ENCODE measurements at regions of chr6 and their contacts with region 1.

Region 1: DNA sequence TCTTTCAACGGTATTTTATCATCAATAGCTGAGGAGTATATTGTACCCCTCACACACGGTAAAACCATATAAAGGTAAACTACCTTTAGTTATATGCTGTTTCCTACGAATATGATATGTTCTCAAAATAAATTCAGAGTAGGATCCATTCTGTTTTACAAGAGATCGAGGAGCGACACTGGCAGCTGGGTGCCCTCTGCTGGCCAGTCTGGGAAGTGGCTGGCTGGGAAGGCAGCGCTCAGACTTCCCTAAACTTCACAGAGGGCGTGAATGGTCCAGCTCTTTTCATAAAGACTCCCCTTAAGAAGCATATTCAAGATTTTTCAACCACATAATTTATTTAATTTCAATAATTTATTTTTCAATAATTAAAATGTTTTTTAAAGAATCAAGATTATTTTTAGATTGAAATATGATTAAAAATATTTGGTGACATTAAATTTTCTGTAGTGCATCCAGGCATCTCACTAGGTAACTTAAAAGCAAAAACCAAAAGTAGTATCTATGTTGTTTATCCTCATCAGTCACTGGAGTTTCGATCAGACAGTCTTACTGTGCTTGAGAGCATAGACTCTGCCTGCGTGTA is 187.5 kb upstream of the PDE10A start:
- DNase-seq: peak; percentile 64
- H3K4me3 ChIP-seq: no peak overlapping the region
- H3K27ac ChIP-seq: no peak overlapping the region
- H3K4me1 ChIP-seq: peaks cover 10% of the 10 kb centered on the region
- H3K27me3 ChIP-seq: peaks cover 80% of the 10 kb centered on the region
- CTCF ChIP-seq: peak; percentile 97

Region 2: DNA sequence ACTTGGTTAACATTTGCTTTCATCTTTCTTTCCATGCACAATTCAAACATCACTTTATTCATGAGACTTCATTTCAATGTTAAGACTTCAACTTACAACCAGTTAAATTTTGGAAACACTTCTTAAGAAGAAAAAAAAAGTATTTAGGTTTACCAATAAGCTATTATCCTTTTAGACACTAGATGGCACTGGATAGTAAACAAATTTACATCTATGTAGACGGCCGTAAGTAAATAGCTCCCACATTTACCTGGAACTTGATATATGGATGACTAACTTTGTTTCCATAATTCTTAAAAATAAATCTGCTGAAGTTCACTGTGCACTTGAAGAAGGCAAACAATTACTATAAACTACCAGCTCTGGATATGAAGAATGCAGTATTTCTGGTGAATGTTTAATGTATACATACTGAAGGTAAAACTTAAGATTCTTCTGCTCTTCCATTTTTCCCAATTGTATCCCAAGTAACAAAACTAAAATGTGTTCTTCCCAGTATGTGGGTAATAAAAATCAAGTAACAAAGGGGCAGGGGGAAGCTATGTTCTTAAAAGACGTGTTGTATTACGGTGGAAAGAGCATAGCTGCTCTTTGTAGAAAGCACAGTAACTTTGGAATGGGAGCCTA is 410.5 kb before region 1 on chr6:
- CTCF ChIA-PET with region 1: interaction called, 10 read pairs
- POLR2A ChIA-PET with region 1: no interaction called
- intact Hi-C with region 1: loop called (anchors 2 kb)
- DNase-seq: peak; percentile 41
- H3K4me3 ChIP-seq: no peak overlapping the region
- H3K27ac ChIP-seq: no peak overlapping the region
- H3K4me1 ChIP-seq: no peaks in the 10 kb centered on the region
- H3K27me3 ChIP-seq: no peaks in the 10 kb centered on the region
- CTCF ChIP-seq: peak; percentile 65

Region 3: GRCh38 chr6:165729307-165729936 is 121.1 kb before region 1 on chr6:
- CTCF ChIA-PET with region 1: interaction called, 3 read pairs
- POLR2A ChIA-PET with region 1: no interaction called
- intact Hi-C with region 1: loop called (anchors 2 kb)
- DNase-seq: peak; percentile 41
- H3K4me3 ChIP-seq: no peak overlapping the region
- H3K27ac ChIP-seq: no peak overlapping the region
- H3K4me1 ChIP-seq: no peaks in the 10 kb centered on the region
- H3K27me3 ChIP-seq: peaks cover 37% of the 10 kb centered on the region
- CTCF ChIP-seq: peak; percentile 86

Region 4: GRCh38 chr6:165834613-165835259 is 15.8 kb before region 1 on chr6:
- CTCF ChIA-PET with region 1: interaction called, 14 read pairs
- POLR2A ChIA-PET with region 1: no interaction called
- intact Hi-C with region 1: no loop called
- DNase-seq: no peak
- H3K4me3 ChIP-seq: no peak overlapping the region
- H3K27ac ChIP-seq: no peak overlapping the region
- H3K4me1 ChIP-seq: no peaks in the 10 kb centered on the region
- H3K27me3 ChIP-seq: peaks cover 16% of the 10 kb centered on the region
- CTCF ChIP-seq: no peak

Measured in A673 (cell line).